ENCODE measurements at regions of chr2 and their contacts with region 1.

Region 1: DNA sequence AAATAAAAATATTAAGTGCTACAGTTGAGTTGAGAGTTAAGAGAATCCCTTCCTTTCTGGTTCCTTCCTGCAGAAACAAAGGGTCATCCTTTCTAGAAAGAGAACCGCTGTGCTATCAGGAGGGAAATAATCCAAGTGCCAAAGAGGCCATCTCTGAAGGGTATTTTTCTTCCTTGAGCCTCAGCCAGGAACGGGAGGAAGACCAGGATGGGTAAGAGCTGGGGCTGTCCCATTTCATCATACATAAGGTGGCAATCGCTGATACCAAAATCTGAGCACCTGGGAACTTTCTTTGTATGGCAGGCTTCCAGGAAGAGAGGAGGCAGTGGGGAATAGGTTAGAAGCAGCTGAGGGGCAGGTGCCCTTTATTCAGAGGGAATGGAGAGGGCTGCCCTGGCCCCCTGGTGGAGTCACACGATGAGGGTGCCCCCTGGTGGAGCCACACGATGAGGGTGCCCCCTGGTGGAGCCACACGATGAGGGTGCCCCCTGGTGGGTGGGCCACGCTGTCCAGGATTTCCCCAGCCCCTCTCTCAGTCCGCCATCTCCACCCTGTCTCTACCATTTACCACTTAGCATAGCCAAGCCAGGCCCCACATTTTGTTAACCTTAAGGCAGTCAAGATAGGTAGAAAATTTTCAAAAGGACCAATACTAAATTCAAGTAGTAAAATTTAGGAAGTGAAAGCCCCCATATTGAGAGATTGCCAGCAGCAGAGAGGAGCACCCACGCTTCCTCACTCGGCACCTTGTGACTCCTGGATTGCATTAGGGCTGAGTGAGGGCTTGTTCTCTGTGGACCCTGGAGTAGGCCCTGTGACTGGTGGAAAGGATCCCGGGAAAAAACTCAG is 10.5 kb upstream of the FAM228A start:
- DNase-seq: peak; percentile 82
- ATAC-seq: peak; percentile 88
- H3K4me3 Mint-ChIP-seq: no peak overlapping the region
- H3K27ac Mint-ChIP-seq: no peak overlapping the region
- H3K4me1 Mint-ChIP-seq: no peaks in the 10 kb centered on the region
- H3K27me3 Mint-ChIP-seq: no peaks in the 10 kb centered on the region

Region 2: DNA sequence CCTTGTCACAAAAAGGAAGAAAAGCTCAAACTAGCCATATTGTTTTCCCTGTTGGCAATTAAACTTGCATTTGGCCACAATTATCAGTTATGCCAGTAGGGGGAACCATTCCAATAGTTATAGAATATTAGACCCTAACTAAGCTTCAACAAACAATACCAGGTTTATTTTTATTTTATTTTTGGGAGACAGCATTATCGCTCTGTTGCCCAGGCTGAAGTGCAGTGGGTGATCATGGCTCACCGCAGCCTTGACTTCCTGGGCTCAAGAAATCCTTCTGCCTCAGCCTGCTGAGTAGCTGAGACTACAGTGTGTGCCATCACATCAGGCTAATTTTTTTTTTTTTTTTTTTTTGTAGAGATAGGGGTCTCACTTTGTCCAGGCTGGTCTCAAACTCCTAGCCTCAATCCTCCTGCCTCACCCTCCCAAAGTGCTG is 339.6 kb before region 1 on chr2:
- CTCF ChIA-PET with region 1: interaction called, 27 read pairs
- POLR2A ChIA-PET with region 1: no interaction called
- intact Hi-C with region 1: loop called (anchors 1 to 2 kb)
- DNase-seq: peak; percentile 17
- ATAC-seq: peak; percentile 60
- H3K4me3 Mint-ChIP-seq: no peak overlapping the region
- H3K27ac Mint-ChIP-seq: no peak overlapping the region
- H3K4me1 Mint-ChIP-seq: peaks cover 3% of the 10 kb centered on the region
- H3K27me3 Mint-ChIP-seq: no peaks in the 10 kb centered on the region

Region 3: DNA sequence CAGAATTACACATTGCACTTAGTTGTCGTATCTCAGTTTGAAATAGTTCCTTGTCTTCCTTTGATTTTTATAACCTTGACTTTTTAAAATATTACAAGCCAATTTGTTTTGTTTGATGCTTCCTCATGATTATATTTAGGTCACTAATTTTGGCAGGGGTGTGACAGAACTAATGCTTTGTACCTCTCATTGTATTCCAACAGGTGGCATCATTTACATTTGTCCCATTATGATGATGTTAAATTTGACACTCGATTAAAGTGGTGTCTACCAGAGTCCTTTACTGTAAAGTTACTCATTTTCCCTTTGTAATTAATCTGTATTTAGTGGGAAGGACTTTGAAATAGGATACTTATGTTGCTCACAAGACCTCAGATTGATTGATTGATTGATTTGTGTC is 176.0 kb before region 1 on chr2:
- CTCF ChIA-PET with region 1: no interaction called
- POLR2A ChIA-PET with region 1: no interaction called
- intact Hi-C with region 1: loop called in 1 of 2 experiments (anchors 1 kb)
- DNase-seq: no peak
- ATAC-seq: no peak
- H3K4me3 Mint-ChIP-seq: no peak overlapping the region
- H3K27ac Mint-ChIP-seq: no peak overlapping the region
- H3K4me1 Mint-ChIP-seq: no peaks in the 10 kb centered on the region
- H3K27me3 Mint-ChIP-seq: no peaks in the 10 kb centered on the region

Region 4: DNA sequence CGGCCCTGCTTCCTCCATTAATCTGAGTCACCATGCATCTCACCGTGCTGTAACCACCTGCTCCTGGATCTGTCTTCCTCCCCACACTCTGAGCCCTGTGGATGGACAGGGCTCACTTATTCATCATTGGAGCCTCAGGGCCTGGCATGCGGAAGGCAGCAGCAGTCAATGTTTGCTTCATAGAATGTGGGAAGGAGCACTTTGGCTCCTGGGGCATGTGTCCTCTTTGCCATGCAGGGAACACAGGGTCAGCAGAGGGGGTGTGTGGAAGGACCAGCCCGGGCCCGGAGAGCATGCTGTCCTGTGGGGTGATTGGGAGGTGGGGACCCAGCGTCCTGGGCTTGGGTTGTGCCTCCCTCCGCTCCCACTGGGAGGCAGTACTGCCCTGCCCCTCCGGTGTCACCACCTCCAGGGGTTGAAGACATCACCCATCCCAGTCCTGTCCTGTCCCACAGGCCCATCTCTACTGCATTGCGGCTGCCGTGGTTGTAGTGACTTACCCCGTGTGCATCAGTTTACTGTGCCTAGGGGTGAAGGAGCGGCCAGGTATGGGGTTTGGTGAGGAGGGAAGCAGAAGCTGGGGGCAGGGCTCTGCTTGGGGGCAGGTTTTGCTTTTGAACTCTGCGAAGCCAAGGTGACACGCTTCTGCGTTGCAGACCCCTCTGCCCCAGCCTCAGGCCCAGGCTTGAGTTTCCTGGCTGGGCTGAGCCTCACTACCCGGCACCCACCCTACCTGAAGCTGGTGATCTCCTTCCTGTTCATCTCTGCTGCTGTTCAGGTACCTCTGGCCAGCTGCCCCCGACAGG is 143.0 kb before region 1 on chr2:
- CTCF ChIA-PET with region 1: interaction called, 3 read pairs
- POLR2A ChIA-PET with region 1: no interaction called
- intact Hi-C with region 1: loop called in 1 of 2 experiments (anchors 1 kb)
- DNase-seq: peak; percentile 53
- ATAC-seq: peak; percentile 81
- H3K4me3 Mint-ChIP-seq: no peak overlapping the region
- H3K27ac Mint-ChIP-seq: no peak overlapping the region
- H3K4me1 Mint-ChIP-seq: no peaks in the 10 kb centered on the region
- H3K27me3 Mint-ChIP-seq: no peaks in the 10 kb centered on the region

Region 5: GRCh38 chr2:24153478-24153877 is 10.9 kb before region 1 on chr2:
- CTCF ChIA-PET with region 1: interaction called, 13 read pairs
- POLR2A ChIA-PET with region 1: no interaction called
- intact Hi-C with region 1: no loop called
- DNase-seq: no peak
- ATAC-seq: no peak
- H3K4me3 Mint-ChIP-seq: no peak overlapping the region
- H3K27ac Mint-ChIP-seq: no peak overlapping the region
- H3K4me1 Mint-ChIP-seq: no peaks in the 10 kb centered on the region
- H3K27me3 Mint-ChIP-seq: no peaks in the 10 kb centered on the region

Region 6: DNA sequence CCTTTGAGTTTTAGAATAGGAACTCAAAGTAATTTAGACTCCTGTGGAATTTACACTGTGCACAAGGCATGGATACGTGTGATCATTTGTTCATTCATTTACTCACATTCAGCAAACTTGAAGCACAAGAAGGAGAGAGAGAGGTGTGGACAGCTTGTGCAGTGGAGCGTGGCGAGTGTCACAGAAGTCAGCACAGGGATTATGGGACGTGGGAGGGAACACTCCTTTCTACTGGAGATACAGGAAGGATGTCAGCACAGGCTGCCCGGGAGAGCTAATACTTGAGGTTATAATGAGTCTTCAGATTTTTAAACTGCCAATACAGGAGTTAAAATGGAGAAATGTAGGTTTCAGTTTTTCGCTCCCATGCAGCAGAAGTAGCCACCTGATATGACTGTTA is 17.5 kb after region 1 on chr2:
- CTCF ChIA-PET with region 1: interaction called, 5 read pairs
- POLR2A ChIA-PET with region 1: interaction called, 10 read pairs
- intact Hi-C with region 1: no loop called
- DNase-seq: no peak
- ATAC-seq: no peak
- H3K4me3 Mint-ChIP-seq: no peak overlapping the region
- H3K27ac Mint-ChIP-seq: no peak overlapping the region
- H3K4me1 Mint-ChIP-seq: peaks cover 2% of the 10 kb centered on the region
- H3K27me3 Mint-ChIP-seq: no peaks in the 10 kb centered on the region

Region 7: DNA sequence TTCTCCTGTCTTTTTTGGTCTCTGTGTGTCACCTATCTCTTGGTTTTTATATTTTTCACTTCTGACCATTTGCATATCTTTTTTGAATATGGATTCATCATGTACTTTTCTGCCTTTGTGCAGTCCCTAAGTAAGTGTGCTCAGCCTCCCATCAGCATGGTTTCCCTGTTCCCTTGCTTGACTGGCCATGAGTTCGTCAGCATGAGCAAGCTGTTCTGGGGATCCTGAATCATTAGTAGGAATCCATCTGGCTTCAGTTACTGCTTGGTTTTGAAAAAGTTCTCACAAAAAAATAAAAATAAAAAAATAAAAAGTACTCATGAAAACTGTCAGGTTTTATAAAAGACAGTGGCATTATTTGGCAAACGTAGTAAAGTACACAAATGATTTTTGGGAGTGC is 470.8 kb after region 1 on chr2:
- CTCF ChIA-PET with region 1: no interaction called
- POLR2A ChIA-PET with region 1: no interaction called
- intact Hi-C with region 1: no loop called
- DNase-seq: no peak
- ATAC-seq: no peak
- H3K4me3 Mint-ChIP-seq: no peak overlapping the region
- H3K27ac Mint-ChIP-seq: no peak overlapping the region
- H3K4me1 Mint-ChIP-seq: peaks cover 11% of the 10 kb centered on the region
- H3K27me3 Mint-ChIP-seq: no peaks in the 10 kb centered on the region